ENCODE measurements at regions of chr1 and their contacts with region 1.

Region 1: DNA sequence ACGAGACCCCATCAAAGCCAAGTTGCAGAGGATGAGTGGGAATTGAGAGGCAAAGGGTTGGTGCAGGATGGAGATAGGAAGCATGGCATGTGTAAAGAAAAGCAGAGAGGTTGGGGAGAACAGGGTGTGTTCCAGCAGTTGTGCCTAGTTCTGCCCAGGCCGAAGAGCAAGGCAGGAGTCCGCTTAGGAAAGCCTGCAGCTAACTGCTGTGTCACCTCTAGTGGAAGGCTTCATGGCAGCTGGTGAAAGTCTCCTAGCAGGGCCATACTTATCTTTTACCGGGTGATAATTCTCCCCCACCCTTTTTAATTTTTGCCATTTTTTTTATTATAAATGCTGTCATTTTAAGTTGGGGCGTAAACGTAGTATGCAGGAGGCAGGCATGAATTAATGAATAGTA is 93.6 kb downstream of the NFIA start:
- DNase-seq: no peak
- ATAC-seq: peak in 2 of 4 donors; percentile 45
- H3K4me3 ChIP-seq: no peak overlapping the region
- H3K27ac ChIP-seq: peak overlapping the region in 1 of 12 donors; percentile 2
- H3K4me1 ChIP-seq: peaks cover 12 to 82% (median 50%) of the 10 kb centered on the region in 12 donors
- H3K27me3 ChIP-seq: no peaks in the 10 kb centered on the region
- CTCF ChIP-seq: no peak
- POLR2A ChIP-seq: no peak

Region 2: DNA sequence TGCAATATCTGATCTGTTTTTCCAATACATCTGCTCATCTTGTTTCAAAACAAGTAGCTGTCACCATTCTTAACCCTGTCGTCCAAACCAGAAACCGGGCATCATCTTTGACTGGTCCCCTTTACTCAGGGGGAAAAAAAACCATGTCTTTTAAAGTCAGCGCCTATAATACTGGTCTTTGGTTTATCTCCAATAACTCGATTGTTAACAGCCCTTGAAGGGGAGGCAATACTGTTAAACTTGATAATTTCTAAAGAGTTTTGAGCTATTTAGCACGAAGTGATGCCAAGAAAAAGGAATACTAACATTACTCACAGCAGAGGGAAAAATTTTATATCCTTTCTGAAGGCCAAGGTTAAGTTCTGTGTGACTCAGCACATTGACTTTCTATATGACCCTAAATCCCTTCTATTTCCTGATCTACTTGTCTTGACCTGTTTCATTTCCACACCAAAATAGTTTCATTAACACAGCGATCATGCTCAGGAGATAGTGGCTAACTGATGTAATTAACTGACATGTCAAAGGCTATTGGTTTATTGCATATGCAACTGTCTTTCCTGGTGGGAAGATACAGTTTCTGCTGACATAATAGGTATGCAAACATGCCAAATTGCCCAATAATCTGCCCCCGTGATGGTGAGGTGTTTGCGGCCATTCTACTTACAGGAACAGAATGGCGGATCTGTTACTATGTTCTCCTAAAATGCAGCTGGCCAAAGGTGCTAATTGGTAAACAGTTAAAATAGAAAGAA is 34.5 kb before region 1 on chr1:
- intact Hi-C with region 1: loop called in 1 of 10 experiments (anchors 5 kb)
- DNase-seq: no peak
- ATAC-seq: peak in 2 of 4 donors; percentile 25 to 33
- H3K4me3 ChIP-seq: no peak overlapping the region
- H3K27ac ChIP-seq: peak overlapping the region in 5 of 12 donors; percentile 0 to 54 (median 25)
- H3K4me1 ChIP-seq: peaks cover 0 to 62% (median 50%) of the 10 kb centered on the region in 12 donors
- H3K27me3 ChIP-seq: no peaks in the 10 kb centered on the region
- CTCF ChIP-seq: no peak
- POLR2A ChIP-seq: no peak

Region 3: DNA sequence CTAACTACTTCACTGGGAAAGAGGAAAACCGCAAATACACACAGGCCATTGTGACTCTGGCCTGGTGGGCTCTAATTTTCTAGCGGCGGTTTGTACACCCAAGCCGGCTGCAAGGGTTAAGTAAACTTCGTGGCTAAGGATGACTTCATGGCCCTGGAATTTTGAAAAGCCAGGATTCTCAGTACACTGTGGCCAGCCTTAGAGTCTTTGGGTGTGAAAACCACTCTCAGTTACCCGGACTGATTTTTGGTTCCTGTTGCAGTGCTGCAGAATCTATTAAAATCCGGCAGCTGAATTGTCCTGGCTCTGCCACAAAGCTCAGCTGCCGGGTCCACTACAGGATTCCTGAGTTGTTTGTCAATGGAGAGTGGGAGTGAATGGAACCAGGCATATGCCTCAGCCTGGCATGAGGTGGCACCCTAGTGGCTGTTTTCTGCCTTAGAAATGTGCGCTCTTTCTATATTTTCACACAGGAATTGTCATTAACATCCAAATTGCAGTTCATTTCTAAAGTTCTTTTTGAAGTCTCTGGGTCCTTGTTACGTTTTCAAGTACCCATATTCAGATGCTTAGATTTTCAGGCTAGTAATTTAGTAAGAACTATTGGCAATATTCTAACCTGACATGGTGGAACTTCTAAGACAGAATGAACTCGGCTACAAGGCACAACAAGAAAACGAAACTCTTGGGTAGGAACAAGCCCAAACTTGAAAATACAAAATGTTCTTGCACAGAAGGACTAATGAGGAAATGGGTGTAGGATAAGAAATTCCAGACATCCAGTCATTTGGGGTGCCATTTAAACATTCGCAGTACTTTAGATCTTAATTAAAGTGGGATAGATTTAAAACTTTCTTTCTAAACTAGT is 162.2 kb after region 1 on chr1:
- intact Hi-C with region 1: loop called in 5 of 10 experiments (anchors 5 to 10 kb)
- DNase-seq: peak in 4 of 5 donors; percentile 62 to 74 (median 72)
- ATAC-seq: peak; percentile 84 to 90 (median 87)
- H3K4me3 ChIP-seq: peak overlapping the region in 9 of 12 donors; percentile 3 to 45 (median 14)
- H3K27ac ChIP-seq: peak overlapping the region; percentile 42 to 86 (median 70)
- H3K4me1 ChIP-seq: peaks cover 2 to 56% (median 35%) of the 10 kb centered on the region in 12 donors
- H3K27me3 ChIP-seq: no peaks in the 10 kb centered on the region
- CTCF ChIP-seq: peak; percentile 48 to 76 (median 66)
- POLR2A ChIP-seq: no peak

Measured in heart left ventricle (tissue), 16 donors.